H1 (cell line): ENCODE measurements at regions of chr10 and their contacts with region 1.

Region 1: DNA sequence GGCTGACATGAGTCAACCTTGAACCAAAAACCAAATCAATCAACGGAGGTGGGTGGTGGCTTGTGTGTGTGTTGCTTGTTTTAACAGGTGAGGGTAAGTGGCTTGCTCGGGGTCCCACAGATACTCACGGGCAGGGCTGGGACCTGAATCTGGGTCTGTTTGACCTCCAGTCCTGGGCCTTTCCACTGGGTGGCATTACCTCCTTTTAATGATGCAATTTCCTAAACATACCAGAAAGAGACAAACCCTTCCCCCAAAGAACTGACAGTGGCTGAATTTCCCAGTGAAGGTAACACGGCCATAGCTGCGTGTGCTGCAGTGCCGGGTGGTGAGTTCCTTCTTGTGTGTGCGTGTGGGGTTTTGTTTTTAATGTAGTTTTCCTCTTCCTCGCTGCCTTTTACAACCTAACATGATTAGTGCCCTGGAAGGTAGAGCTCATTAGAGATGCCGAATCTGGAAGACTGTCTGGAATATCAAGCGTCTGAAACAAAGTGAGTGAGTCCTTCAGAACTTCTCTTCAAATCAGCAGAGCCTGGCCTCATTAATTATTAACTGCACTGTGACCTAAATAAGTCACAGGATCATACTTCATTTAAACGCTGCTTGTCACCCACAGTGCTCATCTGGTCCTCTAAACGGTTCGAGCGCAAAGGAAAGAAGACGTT is 166.1 kb upstream of the TCERG1L start:
- DNase-seq: no peak
- H3K4me3 ChIP-seq: no peak overlapping the region
- H3K27ac ChIP-seq: no peak overlapping the region
- H3K4me1 ChIP-seq: no peaks in the 10 kb centered on the region; a peak in 1 of 7 replicates
- H3K27me3 ChIP-seq: no peaks in the 10 kb centered on the region; a peak in 1 of 7 replicates
- CTCF ChIP-seq: peak in 1 of 3 experiments; percentile 12; a peak in 1 of 4 replicates
- EP300 ChIP-seq: no peak
- POLR2A ChIP-seq: no peak
- RAD21 ChIP-seq: peak; percentile 26 to 47; a peak in 3 of 4 replicates

Region 2: GRCh38 chr10:131487822-131488221 is 10.2 kb after region 1 on chr10:
- CTCF ChIA-PET with region 1: interaction called, 10 read pairs
- POLR2A ChIA-PET with region 1: interaction called, 5 read pairs
- DNase-seq: no peak
- H3K4me3 ChIP-seq: no peak overlapping the region
- H3K27ac ChIP-seq: no peak overlapping the region
- H3K4me1 ChIP-seq: no peaks in the 10 kb centered on the region
- H3K27me3 ChIP-seq: no peaks in the 10 kb centered on the region
- CTCF ChIP-seq: peak; percentile 25 to 53 (median 29); a peak in 3 of 4 replicates
- EP300 ChIP-seq: no peak
- POLR2A ChIP-seq: no peak
- RAD21 ChIP-seq: peak; percentile 23 to 35; a peak in 3 of 4 replicates

Region 3: DNA sequence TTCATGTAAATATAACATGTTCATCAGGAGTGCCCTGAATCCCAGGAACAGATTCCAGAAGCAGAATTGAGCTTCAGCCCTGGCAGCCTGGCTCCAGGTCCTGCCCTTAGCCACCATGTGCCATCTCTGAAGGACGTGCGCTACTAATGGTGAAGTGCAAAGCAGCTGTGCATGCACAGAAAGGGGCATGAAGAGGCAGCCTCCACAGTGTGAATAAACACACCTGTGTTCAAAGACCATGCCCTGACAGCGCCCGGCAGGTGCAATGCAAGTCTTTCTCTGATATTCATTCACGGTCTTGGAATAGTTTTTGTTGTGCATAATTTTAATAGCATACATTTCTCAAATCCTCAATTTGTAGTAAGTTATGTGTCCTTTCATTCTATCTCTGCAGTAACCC is 84.3 kb after region 1 on chr10:
- CTCF ChIA-PET with region 1: no interaction called
- POLR2A ChIA-PET with region 1: no interaction called
- DNase-seq: peak in 1 of 2 experiments; percentile 6
- H3K4me3 ChIP-seq: no peak overlapping the region
- H3K27ac ChIP-seq: no peak overlapping the region
- H3K4me1 ChIP-seq: peaks cover 0 to 3% (median 0%) of the 10 kb centered on the region in 4 experiments; a peak in 3 of 7 replicates
- H3K27me3 ChIP-seq: no peaks in the 10 kb centered on the region
- CTCF ChIP-seq: no peak
- EP300 ChIP-seq: no peak
- POLR2A ChIP-seq: no peak
- RAD21 ChIP-seq: no peak

Region 4: DNA sequence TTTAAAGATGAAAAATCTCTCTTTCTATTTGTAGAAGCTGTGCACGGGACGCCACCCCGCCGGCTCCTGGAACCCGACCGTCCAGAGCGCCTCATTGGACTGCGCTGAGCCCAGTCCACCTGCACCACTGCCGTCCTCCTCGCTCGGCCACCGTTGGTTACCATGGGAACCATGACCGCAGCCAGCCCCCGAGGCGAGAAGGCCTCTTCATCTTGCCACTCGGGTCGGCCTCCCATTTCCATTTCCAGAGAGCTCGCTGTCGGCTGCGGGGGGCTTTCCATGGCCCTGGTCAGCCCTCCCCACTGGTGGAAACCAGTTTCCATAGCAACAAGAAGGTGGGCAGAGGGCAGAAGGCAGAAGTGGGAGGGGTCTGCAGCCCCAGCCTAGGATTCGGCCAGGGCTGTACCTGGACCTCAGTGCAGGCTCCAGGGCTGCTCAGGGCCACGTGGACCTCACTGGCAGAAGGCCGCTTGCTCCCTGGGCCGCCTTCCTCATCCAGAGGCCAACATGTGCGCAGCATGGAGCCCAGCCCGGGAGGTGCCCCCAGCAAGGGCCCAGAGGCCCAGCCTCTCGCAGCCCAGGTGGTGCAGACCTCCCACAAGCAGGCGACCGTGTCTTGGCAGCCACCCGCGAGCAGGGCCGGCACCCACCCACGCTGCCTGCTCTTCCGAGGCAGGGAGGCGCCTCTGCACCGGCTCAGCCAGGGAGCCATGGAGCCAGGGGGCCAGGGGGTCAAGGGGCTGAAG is 139.7 kb after region 1 on chr10:
- CTCF ChIA-PET with region 1: no interaction called
- POLR2A ChIA-PET with region 1: no interaction called
- DNase-seq: peak in 1 of 2 experiments; percentile 46
- H3K4me3 ChIP-seq: no peak overlapping the region
- H3K27ac ChIP-seq: no peak overlapping the region
- H3K4me1 ChIP-seq: no peaks in the 10 kb centered on the region; a peak in 2 of 7 replicates
- H3K27me3 ChIP-seq: no peaks in the 10 kb centered on the region
- CTCF ChIP-seq: no peak
- EP300 ChIP-seq: no peak
- POLR2A ChIP-seq: no peak
- RAD21 ChIP-seq: no peak